ENCODE measurements at regions of chr6 and their contacts with region 1.

Region 1: DNA sequence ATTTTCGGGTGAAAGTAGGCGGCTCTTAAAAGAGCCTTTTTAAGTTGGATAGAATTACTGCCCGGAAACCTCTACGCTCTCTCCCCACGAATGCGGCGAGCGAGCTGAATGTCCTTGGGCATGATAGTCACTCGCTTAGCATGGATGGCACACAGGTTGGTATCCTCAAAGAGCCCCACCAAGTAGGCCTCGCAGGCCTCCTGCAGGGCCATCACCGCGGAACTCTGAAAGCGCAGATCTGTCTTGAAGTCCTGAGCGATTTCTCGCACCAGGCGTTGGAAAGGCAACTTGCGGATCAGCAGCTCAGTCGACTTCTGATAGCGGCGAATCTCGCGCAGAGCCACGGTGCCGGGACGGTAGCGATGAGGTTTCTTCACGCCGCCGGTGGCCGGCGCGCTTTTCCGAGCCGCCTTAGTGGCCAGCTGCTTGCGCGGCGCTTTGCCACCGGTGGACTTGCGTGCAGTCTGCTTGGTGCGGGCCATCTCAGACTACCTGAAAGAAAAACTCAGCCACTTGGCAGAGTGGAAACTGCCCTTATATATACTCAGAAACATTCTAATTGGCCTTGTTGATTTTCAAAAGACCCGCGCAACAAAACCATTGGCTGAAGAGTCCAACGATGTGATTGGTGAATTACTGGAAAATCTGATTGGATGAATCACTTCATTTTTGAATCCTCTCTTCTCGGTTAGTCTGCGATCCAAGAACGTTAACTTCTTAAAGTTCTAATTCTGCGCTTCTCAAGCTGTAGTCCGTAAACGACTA is 93.9 kb upstream of the BTN3A2 start:
- DNase-seq: peak in 1 of 2 experiments; percentile 85
- H3K4me3 ChIP-seq: peak overlapping the region; percentile 73 to 97 (median 88)
- H3K27ac ChIP-seq: peak overlapping the region; percentile 93
- H3K4me1 ChIP-seq: peaks cover 0 to 10% (median 4%) of the 10 kb centered on the region in 4 experiments; a peak in 4 of 7 replicates
- H3K27me3 ChIP-seq: no peaks in the 10 kb centered on the region
- CTCF ChIP-seq: no peak
- EP300 ChIP-seq: no peak
- POLR2A ChIP-seq: peak; percentile 94 to 100
- RAD21 ChIP-seq: no peak

Region 2: DNA sequence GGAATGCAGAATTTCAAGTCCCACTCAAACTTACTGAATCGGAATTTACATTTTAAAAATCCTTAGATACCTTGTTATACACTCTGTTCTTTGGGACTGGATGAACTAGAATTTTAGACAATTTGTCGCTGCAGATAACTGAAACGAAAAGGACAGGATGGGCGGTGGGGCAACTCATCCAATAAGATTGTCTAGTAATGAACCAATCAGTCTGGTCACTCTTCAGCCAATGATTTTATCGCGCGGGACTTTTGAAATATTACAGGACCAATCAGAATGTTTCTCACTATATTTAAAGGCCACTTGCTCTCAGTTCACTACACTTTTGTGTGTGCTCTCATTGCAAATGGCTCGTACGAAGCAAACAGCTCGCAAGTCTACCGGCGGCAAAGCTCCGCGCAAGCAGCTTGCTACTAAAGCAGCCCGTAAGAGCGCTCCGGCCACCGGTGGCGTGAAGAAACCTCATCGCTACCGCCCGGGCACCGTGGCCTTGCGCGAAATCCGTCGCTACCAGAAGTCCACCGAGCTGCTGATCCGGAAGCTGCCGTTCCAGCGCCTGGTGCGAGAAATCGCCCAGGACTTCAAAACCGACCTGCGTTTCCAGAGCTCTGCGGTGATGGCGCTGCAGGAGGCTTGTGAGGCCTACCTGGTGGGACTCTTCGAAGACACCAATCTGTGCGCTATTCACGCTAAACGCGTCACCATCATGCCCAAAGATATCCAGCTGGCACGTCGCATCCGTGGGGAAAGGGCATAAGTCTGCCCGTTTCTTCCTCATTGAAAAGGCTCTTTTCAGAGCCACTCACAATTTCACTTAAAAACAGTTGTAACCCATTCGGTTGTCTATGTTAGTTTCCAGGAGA is 225.8 kb before region 1 on chr6:
- CTCF ChIA-PET with region 1: no interaction called
- POLR2A ChIA-PET with region 1: interaction called, 10 read pairs
- DNase-seq: no peak
- H3K4me3 ChIP-seq: no peak overlapping the region
- H3K27ac ChIP-seq: 0 out of 2 replicates have a peak overlapping the region, but pooled peaks have one; percentile 22
- H3K4me1 ChIP-seq: peaks cover 0 to 6% (median under 1%) of the 10 kb centered on the region in 4 experiments; a peak in 1 of 7 replicates
- H3K27me3 ChIP-seq: no peaks in the 10 kb centered on the region
- CTCF ChIP-seq: peak in 1 of 3 experiments; percentile 1; a peak in 1 of 4 replicates
- EP300 ChIP-seq: no peak
- POLR2A ChIP-seq: no peak
- RAD21 ChIP-seq: no peak

Region 3: GRCh38 chr6:26196846-26197648 is 74.0 kb before region 1 on chr6:
- CTCF ChIA-PET with region 1: no interaction called
- POLR2A ChIA-PET with region 1: interaction called, 744 read pairs
- DNase-seq: peak in 1 of 2 experiments; percentile 76
- H3K4me3 ChIP-seq: peak overlapping the region; percentile 85 to 98 (median 89)
- H3K27ac ChIP-seq: peak overlapping the region; percentile 82
- H3K4me1 ChIP-seq: peaks cover 0 to 1% (median 0%) of the 10 kb centered on the region in 4 experiments; a peak in 1 of 7 replicates
- H3K27me3 ChIP-seq: no peaks in the 10 kb centered on the region
- CTCF ChIP-seq: no peak
- EP300 ChIP-seq: no peak
- POLR2A ChIP-seq: peak; percentile 99
- RAD21 ChIP-seq: no peak

Region 4: DNA sequence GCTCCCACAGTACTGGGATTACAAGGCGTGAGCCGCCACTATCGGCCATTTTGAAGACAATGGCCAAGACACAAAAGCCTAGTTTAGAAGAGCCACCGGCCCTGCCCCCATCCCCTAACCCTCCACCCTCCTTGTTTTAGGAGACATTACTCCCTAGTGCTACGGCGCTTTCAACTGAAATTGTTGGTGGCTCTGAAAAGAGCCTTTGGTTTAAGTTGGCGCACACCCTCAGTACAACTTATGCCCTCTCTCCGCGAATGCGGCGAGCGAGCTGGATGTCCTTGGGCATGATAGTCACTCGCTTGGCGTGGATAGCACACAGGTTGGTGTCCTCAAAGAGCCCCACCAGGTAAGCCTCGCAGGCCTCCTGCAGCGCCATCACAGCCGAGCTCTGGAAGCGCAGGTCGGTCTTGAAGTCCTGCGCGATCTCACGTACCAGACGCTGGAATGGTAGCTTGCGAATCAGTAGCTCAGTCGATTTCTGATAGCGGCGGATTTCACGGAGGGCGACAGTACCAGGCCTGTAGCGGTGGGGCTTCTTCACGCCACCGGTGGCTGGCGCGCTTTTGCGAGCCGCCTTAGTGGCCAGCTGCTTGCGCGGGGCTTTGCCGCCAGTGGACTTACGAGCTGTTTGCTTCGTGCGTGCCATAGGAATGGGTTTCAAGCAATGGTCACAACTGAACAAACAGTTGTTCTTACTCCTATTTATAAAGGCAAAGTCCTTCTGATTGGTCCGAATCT is 21.0 kb before region 1 on chr6:
- CTCF ChIA-PET with region 1: interaction called, 93 read pairs
- POLR2A ChIA-PET with region 1: no interaction called
- DNase-seq: peak in 1 of 2 experiments; percentile 73
- H3K4me3 ChIP-seq: peak overlapping the region; percentile 75 to 98 (median 90)
- H3K27ac ChIP-seq: peak overlapping the region; percentile 97
- H3K4me1 ChIP-seq: peaks cover 0 to 5% (median 4%) of the 10 kb centered on the region in 4 experiments; a peak in 5 of 7 replicates
- H3K27me3 ChIP-seq: no peaks in the 10 kb centered on the region
- CTCF ChIP-seq: peak in 2 of 3 experiments; percentile 23 to 34; a peak in 2 of 4 replicates
- EP300 ChIP-seq: 0 out of 3 replicates have a peak, but pooled peaks of 1 of the 2 experiments have one; percentile 34
- POLR2A ChIP-seq: peak; percentile 98
- RAD21 ChIP-seq: no peak

Region 5: DNA sequence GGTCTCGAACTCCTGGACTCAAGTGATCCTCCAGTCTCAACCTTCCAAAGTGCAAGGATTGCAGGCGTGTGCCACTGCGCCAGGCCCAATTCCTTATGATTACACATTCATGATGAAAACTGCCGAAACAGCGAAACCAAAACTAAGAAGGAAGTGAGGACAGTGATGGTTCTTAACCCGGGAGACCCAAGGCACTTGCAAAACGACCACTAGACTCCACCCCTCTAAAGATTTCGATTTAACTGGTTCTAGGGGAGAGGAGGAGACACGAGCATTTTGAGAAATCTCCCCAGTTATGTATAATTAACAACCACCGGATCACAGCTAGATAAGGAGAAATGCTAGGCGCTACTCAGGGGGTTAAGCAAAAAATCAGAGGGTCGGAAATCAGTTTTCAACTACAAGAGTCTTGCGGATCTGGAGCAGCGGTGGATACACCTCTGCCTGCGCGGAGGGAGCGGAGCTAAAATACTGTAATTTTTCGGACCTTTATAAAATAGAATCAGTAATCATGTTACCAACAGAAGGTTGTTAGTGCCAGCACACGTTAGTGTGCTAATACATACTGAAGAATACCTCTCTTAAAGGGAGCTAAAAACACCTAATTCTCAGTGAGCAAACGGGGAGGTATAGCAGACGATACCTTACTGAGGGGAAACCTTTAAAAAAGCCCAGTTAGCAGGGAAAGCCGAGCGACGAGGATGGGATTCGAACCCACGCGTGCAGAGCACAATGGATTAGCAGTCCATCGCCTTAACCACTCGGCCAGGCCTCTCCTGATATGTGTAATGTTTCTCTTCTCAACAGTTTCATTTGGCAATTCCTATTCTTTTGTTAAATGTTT is 33.9 kb after region 1 on chr6:
- CTCF ChIA-PET with region 1: no interaction called
- POLR2A ChIA-PET with region 1: interaction called, 18 read pairs
- DNase-seq: peak in 1 of 2 experiments; percentile 83
- H3K4me3 ChIP-seq: peak overlapping the region; percentile 44 to 75 (median 68)
- H3K27ac ChIP-seq: no peak overlapping the region
- H3K4me1 ChIP-seq: peaks cover 0 to 3% (median 1%) of the 10 kb centered on the region in 4 experiments; a peak in 3 of 7 replicates
- H3K27me3 ChIP-seq: no peaks in the 10 kb centered on the region
- CTCF ChIP-seq: no peak
- EP300 ChIP-seq: no peak
- POLR2A ChIP-seq: no peak
- RAD21 ChIP-seq: no peak

Region 6: GRCh38 chr6:26421259-26422144 is 150.4 kb after region 1 on chr6:
- CTCF ChIA-PET with region 1: no interaction called
- POLR2A ChIA-PET with region 1: no interaction called
- DNase-seq: peak; percentile 34 to 76
- H3K4me3 ChIP-seq: peak overlapping the region; percentile 71 to 89 (median 82)
- H3K27ac ChIP-seq: 0 out of 2 replicates have a peak overlapping the region, but pooled peaks have one; percentile 46
- H3K4me1 ChIP-seq: peaks cover 0 to 7% (median 1%) of the 10 kb centered on the region in 4 experiments; a peak in 2 of 7 replicates
- H3K27me3 ChIP-seq: no peaks in the 10 kb centered on the region
- CTCF ChIP-seq: no peak
- EP300 ChIP-seq: no peak
- POLR2A ChIP-seq: no peak
- RAD21 ChIP-seq: no peak

Region 7: DNA sequence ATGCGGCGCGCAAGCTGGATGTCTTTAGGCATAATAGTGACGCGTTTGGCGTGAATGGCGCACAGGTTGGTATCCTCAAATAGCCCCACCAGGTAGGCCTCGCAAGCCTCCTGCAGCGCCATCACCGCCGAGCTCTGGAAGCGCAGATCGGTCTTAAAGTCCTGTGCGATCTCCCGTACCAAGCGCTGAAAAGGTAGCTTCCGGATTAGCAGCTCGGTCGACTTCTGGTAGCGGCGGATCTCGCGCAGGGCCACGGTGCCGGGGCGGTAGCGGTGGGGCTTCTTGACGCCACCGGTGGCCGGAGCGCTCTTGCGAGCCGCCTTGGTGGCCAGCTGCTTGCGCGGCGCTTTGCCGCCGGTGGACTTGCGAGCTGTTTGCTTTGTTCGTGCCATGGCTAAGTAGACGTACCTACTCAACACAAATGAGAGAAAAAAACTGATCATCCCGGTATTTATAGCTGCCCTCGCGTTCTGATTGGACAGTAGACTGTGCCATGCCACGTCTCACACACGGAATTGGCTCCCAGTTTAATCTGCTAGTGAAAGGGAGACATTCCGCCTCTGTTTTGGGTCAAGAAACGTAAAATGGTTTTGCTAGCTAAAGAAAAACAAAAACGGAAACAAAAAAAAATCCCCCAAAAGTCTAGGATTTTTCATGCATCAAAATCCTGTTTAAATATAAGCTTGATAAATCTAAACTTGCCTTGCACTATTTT is 1601.0 kb after region 1 on chr6:
- CTCF ChIA-PET with region 1: no interaction called
- POLR2A ChIA-PET with region 1: interaction called, 49 read pairs
- DNase-seq: peak in 1 of 2 experiments; percentile 89
- H3K4me3 ChIP-seq: peak overlapping the region; percentile 61 to 73 (median 67)
- H3K27ac ChIP-seq: peak overlapping the region; percentile 96
- H3K4me1 ChIP-seq: peaks cover 0 to 16% (median 9%) of the 10 kb centered on the region in 4 experiments; a peak in 5 of 7 replicates
- H3K27me3 ChIP-seq: no peaks in the 10 kb centered on the region
- CTCF ChIP-seq: peak in 2 of 3 experiments; percentile 22 to 26; a peak in 3 of 4 replicates
- EP300 ChIP-seq: no peak; a peak in 1 of 3 replicates
- POLR2A ChIP-seq: peak; percentile 97 to 98
- RAD21 ChIP-seq: no peak